ENCODE measurements at regions of chr11 and their contacts with region 1.

Region 1: GRCh38 chr11:35617687-35618496 is at the start of gene FJX1:
- DNase-seq: no peak
- H3K4me3 ChIP-seq: peak within 1 kb of the TSS; percentile 56 to 91 (median 89)
- H3K27ac ChIP-seq: peak within 1 kb of the TSS; percentile 95
- H3K4me1 ChIP-seq: peaks cover 46% of the 10 kb centered on the region
- H3K27me3 ChIP-seq: no peaks in the 10 kb centered on the region
- CTCF ChIP-seq: no peak
- polyA plus RNA-seq, gene FJX1: 19.0 to 25.3 TPM (median 19.7 TPM) in 3 replicates

Region 2: DNA sequence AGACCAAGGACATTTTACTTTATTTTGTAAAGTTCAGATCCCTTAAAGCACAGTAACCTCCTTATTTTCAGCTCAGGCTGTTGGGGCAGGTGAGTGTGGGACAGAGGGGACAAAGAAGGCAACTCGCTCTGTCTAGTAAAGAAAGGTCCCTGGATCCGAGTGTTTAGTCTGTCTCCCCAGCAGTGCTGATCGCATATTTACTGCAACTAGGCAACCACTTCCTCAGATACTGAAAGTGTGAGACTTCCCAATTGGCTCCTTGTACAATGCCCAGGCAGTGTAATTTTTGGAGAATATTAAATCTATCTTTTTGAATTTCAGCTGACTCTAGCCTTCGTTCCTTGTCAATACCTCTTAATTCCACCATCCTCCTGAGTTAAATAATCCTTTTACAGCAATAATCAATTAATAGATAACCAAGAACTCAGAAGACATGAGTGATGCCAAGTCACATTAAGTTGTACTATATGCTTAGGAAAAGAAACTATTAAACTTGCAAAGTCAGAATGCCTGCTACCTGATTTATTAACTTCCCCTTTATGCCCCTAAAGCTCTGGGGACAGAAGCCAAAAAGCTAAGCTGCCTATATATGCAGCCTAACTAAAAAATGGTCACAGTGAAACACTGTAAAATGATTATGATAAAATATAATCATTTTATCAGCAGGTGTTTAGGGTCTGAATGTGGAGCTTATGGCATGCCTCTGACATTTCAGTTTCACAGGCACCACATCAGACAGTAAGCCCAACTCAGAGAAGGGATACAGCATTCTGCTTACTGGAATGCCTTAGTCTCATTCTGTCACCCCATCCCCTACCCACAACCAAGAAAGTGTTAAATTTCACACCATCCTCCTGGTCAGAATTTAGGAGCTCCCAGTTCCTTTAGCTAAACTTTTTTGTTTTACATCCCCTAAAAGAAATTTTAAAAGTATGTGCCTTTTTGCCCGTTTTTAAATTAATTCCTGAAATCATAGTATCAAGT is 183.4 kb after region 1 on chr11:
- dilution Hi-C with region 1: loop called (anchors 25 kb)
- DNase-seq: no peak
- H3K4me3 ChIP-seq: no peak overlapping the region
- H3K27ac ChIP-seq: peak overlapping the region; percentile 36
- H3K4me1 ChIP-seq: peaks cover 59% of the 10 kb centered on the region
- H3K27me3 ChIP-seq: no peaks in the 10 kb centered on the region
- CTCF ChIP-seq: no peak

Measured in keratinocyte (primary cell).